Ascending aorta (tissue), 2 donors: ENCODE measurements at regions of chrX and their contacts with region 1.

Region 1: DNA sequence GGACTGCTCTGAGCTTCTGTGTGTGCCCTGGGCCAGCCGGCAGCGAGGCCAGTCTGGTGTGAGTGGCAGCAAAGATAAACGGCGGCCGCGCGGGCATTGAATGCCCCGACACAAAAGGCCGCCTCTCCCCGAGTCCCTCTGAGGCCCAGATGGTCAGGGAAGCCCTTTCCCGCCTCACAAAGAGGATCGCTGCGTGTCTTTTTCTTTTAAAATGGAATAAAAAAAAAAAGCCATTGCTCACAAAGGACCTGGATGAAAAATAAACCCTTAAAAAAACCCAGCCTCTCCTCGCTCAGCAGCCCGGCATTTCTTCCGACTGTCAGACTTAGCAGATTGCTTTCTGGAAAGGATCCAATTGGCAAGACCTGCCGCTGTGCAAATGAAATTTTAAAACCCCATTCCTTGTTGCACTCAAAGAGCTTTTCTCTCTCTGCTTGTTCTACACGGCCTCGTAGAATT is 578.7 kb downstream of the BCOR start:
- DNase-seq: no peak
- H3K4me3 ChIP-seq: peak overlapping the region; percentile 2 to 54
- H3K27ac ChIP-seq: peak overlapping the region in 1 of 2 donors; percentile 60
- H3K4me1 ChIP-seq: no peaks in the 10 kb centered on the region
- H3K27me3 ChIP-seq: no peaks in the 10 kb centered on the region
- CTCF ChIP-seq: no peak

Region 2: DNA sequence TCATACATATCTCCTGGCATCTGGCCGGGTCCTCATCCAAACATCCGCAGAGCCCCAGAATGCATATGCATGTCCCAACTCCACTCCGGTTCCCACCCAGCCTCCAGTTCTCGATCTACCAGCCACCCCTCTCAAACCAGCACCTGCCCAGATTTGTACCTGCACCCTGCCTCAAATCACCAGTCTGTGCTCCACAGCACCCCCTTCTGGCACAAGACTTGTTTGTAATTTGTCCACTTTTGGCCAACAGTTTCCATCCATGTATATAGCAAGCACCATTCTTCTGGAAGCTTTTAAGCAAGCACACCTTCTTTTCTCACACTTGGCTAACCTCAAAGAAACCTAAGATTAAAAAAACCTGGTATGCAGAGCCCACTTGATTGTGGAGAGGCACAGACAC is 73.7 kb before region 1 on chrX:
- intact Hi-C with region 1: no loop called
- DNase-seq: no peak
- H3K4me3 ChIP-seq: no peak overlapping the region
- H3K27ac ChIP-seq: no peak overlapping the region
- H3K4me1 ChIP-seq: no peaks in the 10 kb centered on the region
- H3K27me3 ChIP-seq: no peaks in the 10 kb centered on the region
- CTCF ChIP-seq: peak in 2 of 3 experiments; percentile 19 to 22

Region 3: GRCh38 chrX:39633293-39633692 is 114.2 kb after region 1 on chrX:
- intact Hi-C with region 1: no loop called
- DNase-seq: no peak
- H3K4me3 ChIP-seq: no peak overlapping the region
- H3K27ac ChIP-seq: no peak overlapping the region
- H3K4me1 ChIP-seq: no peaks in the 10 kb centered on the region
- H3K27me3 ChIP-seq: no peaks in the 10 kb centered on the region
- CTCF ChIP-seq: no peak

Region 4: GRCh38 chrX:39665830-39666518 is 146.9 kb after region 1 on chrX:
- intact Hi-C with region 1: no loop called
- DNase-seq: no peak
- H3K4me3 ChIP-seq: no peak overlapping the region
- H3K27ac ChIP-seq: no peak overlapping the region
- H3K4me1 ChIP-seq: no peaks in the 10 kb centered on the region
- H3K27me3 ChIP-seq: no peaks in the 10 kb centered on the region
- CTCF ChIP-seq: no peak

Region 5: GRCh38 chrX:39721566-39722279 is 202.7 kb after region 1 on chrX:
- intact Hi-C with region 1: loop called (anchors 5 kb)
- DNase-seq: peak in 1 of 2 donors; percentile 81
- H3K4me3 ChIP-seq: peak overlapping the region in 1 of 2 donors; percentile 31
- H3K27ac ChIP-seq: peak overlapping the region; percentile 68 to 72
- H3K4me1 ChIP-seq: peaks cover 0 to 3% of the 10 kb centered on the region in 2 donors
- H3K27me3 ChIP-seq: no peaks in the 10 kb centered on the region
- CTCF ChIP-seq: no peak